ENCODE measurements at regions of chr3 and their contacts with region 1.

Region 1: DNA sequence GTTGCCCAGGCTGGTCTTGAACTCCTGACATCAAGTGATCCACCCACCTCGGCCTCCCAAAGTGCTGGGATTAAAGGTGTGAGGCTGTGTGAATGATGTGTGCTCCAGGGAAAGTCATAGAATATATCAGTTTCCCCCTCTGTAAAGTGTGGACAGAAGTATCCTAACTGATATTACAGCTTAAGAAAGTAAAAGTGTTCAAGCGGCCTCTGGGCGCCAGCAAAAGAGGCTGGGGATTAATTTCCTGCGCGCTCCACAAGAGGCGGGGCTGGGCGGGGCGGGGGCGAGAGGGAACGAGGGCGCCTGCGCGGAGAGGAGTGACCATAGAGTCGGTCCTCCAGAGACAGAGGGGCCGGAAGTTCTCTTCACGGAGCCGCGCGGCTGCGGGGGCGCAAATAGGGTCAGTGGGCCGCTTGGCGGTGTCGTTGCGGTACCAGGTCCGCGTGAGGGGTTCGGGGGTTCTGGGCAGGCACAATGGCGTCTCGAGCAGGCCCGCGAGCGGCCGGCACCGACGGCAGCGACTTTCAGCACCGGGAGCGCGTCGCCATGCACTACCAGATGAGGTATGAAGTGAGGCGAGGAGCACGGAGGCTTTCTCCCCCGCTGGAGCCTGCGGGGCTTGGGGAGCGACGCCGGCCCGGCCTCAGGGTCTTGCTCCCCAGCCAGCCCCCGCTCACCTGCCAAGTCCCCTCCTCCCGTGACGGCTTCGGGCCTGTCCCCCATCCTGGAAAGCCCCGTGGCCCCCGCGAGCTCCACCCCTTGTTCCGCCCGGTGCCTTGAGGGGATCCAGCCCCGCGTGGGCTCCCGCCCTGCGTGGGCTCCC is at the start of gene JAGN1:
- DNase-seq: peak; percentile 93
- ATAC-seq: peak; percentile 91
- H3K4me3 Mint-ChIP-seq: peak within 1 kb of the TSS; percentile 99
- H3K27ac Mint-ChIP-seq: peak within 1 kb of the TSS; percentile 98
- H3K4me1 Mint-ChIP-seq: peaks cover 38% of the 10 kb centered on the region
- H3K27me3 Mint-ChIP-seq: peaks cover 2% of the 10 kb centered on the region
- total RNA-seq, gene JAGN1: 30.2 to 31.0 TPM

Region 2: DNA sequence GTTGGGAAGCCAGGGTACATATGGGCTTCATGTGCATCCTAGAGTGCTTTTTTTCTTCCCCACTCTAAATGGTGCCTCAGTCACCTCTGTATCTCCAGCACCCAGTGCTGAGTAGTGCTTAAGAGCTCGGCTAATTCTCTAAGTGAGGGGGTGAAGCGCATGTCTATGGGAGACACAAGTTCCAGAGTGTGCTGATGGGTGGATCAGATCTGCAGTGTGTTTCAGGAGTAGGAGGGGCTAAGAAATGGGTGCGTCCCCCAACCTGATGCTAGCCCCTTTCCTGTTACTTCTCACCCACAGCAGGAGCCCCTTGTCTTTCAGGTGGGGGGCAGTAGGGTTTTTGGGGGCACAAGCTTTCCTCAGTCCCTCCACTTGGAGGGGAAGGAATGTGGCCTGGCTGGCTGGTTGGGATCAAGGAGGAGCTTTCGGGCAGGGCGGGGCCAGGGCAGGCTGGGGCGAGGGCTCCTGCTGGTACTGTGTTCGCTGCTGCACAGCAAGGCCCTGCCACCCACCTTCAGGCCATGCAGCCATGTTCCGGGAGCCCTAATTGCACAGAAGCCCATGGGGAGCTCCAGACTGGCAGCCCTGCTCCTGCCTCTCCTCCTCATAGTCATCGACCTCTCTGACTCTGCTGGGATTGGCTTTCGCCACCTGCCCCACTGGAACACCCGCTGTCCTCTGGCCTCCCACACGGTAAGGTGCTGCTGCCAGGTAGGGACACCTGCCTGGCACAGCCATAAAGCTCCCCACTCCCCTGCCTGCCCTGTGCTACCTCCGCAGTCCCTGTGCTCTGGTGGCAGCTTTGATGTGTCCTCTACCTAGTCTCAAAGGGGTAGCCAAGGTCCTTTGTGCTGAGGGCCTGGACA is 12.1 kb after region 1 on chr3 and contains the start of gene IL17RE:
- CTCF ChIA-PET with region 1: interaction called, 20 read pairs
- POLR2A ChIA-PET with region 1: interaction called, 29 read pairs
- DNase-seq: peak; percentile 38
- ATAC-seq: peak; percentile 77
- H3K4me3 Mint-ChIP-seq: peak within 1 kb of the TSS; percentile 30
- H3K27ac Mint-ChIP-seq: peak within 1 kb of the TSS; percentile 83
- H3K4me1 Mint-ChIP-seq: peaks cover 35% of the 10 kb centered on the region
- H3K27me3 Mint-ChIP-seq: no peaks in the 10 kb centered on the region
- total RNA-seq, gene IL17RE: 1.3 to 1.8 TPM

Region 3: GRCh38 chr3:9915254-9916141 is 25.0 kb after region 1 on chr3:
- CTCF ChIA-PET with region 1: no interaction called
- POLR2A ChIA-PET with region 1: interaction called, 15 read pairs
- DNase-seq: peak; percentile 36
- ATAC-seq: peak; percentile 61
- H3K4me3 Mint-ChIP-seq: peak overlapping the region; percentile 64
- H3K27ac Mint-ChIP-seq: no peak overlapping the region
- H3K4me1 Mint-ChIP-seq: peaks cover 20% of the 10 kb centered on the region
- H3K27me3 Mint-ChIP-seq: peaks cover 6% of the 10 kb centered on the region

Region 4: DNA sequence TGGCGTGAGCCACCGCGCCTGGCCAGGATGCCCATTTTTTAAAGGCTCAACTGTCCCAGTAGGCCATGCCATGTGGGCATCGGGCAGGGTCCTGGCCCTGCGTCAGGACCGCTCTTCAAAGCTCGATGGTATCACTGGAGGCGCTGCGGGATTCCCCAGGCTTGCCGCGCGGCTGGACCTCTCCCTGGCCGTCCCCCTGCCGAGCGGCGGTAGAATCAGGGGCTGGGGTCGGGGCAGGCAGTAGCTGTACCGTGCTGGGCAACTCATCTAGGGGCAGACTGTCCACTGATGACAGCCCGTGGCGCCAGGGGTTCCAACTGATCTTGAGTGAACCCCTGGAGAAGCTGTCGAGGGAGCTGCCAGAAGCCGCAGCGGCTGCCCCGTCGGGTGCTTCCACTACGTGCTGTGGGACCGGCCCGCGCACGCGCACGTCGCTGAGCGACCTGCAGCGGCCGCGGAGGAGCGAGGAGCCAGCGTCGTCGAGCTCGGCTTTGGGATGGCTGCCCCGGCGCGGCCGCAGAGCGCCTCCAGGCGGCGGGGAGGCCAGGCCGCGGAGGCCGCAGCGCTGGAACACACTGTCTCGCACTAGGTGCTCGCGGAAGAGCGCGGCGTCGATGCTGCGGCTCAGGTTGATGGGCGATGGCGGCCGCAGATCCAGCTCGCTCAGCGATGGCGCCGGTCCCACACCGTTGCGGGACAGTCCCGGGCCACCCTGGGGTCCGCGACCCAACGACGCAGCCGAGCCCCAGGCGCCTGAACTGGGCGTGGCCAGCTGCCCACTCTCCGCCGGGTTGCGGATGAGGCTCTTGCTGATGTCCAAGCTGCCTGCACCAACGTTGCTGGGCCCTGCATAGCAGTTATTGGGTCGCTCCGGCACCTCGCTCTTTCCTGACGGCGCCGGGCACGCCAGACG is 55.9 kb after region 1 on chr3:
- CTCF ChIA-PET with region 1: interaction called, 10 read pairs
- POLR2A ChIA-PET with region 1: interaction called, 4 read pairs
- DNase-seq: peak; percentile 81
- ATAC-seq: peak; percentile 90
- H3K4me3 Mint-ChIP-seq: peak overlapping the region; percentile 76
- H3K27ac Mint-ChIP-seq: peak overlapping the region; percentile 78
- H3K4me1 Mint-ChIP-seq: peaks cover 12% of the 10 kb centered on the region
- H3K27me3 Mint-ChIP-seq: no peaks in the 10 kb centered on the region

Region 5: GRCh38 chr3:10041034-10041433 is 150.6 kb after region 1 on chr3:
- CTCF ChIA-PET with region 1: no interaction called
- POLR2A ChIA-PET with region 1: no interaction called
- DNase-seq: no peak
- ATAC-seq: no peak
- H3K4me3 Mint-ChIP-seq: no peak overlapping the region
- H3K27ac Mint-ChIP-seq: no peak overlapping the region
- H3K4me1 Mint-ChIP-seq: no peaks in the 10 kb centered on the region
- H3K27me3 Mint-ChIP-seq: no peaks in the 10 kb centered on the region

Region 6: DNA sequence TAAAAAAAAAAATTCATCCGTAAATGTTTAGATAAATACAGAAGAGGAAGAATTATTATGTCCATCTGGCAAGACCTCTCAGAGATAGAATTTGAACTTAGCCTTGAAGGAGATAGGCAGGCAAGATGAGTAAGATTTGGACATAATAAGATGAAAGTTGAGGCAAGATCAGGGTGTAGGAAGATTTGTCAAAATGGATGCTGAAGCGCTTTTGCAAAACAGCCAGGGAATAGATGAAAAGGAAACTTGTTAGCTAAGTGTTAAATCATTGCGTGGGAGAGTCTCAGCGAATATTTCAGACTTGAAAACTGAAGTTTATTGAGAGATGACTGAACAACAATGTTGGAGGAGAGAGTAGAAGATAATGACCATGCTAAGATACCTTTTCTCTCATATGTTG is 232.3 kb after region 1 on chr3:
- CTCF ChIA-PET with region 1: no interaction called
- POLR2A ChIA-PET with region 1: no interaction called
- DNase-seq: no peak
- ATAC-seq: no peak
- H3K4me3 Mint-ChIP-seq: no peak overlapping the region
- H3K27ac Mint-ChIP-seq: no peak overlapping the region
- H3K4me1 Mint-ChIP-seq: peaks cover 30% of the 10 kb centered on the region
- H3K27me3 Mint-ChIP-seq: no peaks in the 10 kb centered on the region